ENCODE measurements at regions of chr4 and their contacts with region 1.

Region 1: DNA sequence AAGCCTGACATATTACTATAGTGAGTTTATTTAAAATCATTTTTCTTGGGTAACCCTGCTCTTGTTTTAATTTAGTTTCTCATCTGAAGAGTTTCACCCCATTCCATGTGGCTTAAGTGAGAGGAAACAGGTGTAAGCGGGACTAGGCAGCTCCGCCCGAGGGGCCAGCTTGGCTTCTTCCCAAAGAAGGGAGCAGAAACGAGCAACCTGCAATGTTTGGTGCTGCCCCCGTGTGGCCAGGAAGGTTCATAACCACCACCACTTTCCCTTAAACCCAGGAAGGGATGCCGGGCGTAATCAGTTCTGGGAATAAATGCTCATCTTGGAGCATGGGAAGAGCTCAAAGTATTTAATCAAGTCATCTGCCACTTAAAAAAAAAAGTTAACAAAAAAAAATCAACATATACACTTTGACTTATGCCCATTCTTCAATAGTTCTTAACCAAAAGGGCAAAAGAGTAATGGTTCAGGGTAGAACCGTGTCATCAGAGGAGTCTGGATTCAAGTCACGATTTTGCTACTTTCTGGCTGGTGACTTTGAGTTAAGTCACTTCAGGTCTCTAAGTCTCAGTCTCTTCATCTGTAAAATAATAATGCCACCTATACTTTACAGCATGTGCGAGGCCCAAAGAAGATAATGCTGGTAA is 147.9 kb downstream of the NSUN7 start:
- DNase-seq: peak; percentile 67
- H3K4me3 Mint-ChIP-seq: peak overlapping the region; percentile 11
- H3K27ac Mint-ChIP-seq: no peak overlapping the region
- H3K4me1 Mint-ChIP-seq: peaks cover 9% of the 10 kb centered on the region
- H3K27me3 Mint-ChIP-seq: peaks cover 14% of the 10 kb centered on the region

Region 2: DNA sequence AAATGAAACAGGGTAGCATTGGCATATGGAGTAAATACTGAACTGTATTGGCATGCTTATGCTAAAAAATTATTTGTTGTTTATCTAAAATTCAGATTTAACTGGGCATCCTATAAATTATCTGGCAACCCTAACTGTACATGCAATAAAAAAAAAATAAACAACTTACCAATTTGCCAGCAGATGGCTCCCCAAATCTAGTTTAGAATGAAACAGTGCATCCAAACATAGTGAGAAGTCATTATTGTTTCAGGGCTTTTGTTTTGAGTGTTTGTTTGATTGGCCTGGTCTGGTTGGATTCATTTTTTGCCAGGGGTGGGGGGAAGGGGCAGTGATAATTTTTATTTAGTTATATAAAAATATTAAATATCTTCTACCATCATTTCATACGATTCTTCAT is 160.8 kb before region 1 on chr4:
- CTCF ChIA-PET with region 1: interaction called, 18 read pairs
- DNase-seq: no peak
- H3K4me3 Mint-ChIP-seq: no peak overlapping the region
- H3K27ac Mint-ChIP-seq: no peak overlapping the region
- H3K4me1 Mint-ChIP-seq: peaks cover 16% of the 10 kb centered on the region
- H3K27me3 Mint-ChIP-seq: peaks cover 19% of the 10 kb centered on the region

Region 3: DNA sequence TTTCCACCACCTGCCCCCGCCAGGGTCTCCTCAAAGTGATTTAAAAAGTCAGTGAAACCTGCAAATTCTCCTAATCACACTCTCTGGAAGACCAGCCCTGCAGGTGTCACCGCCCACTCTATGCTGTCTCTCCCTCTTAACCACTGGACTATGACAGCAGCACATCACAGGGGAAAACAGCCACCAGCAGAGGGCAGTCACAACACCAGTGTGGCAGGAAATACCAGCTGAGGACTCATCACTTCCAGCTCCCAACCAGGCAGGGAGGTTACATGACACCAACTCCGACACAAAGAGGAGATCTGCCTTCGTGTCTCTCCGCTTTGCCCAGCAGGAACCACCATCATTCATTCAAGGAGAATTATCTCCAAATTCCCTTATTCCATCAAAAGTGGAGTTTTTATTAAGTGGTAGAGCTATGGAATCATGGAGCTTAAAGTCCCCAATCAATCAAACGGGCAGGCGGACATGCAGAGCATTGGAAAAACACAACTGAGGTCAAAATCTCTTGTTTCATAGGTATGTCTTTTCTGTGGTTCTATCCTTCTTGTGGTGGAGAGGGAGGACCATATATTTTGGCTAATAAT is 56.6 kb before region 1 on chr4:
- CTCF ChIA-PET with region 1: interaction called, 36 read pairs
- DNase-seq: peak; percentile 85
- H3K4me3 Mint-ChIP-seq: no peak overlapping the region
- H3K27ac Mint-ChIP-seq: no peak overlapping the region
- H3K4me1 Mint-ChIP-seq: no peaks in the 10 kb centered on the region
- H3K27me3 Mint-ChIP-seq: peaks cover 11% of the 10 kb centered on the region

Region 4: GRCh38 chr4:40887288-40888131 is 10.2 kb before region 1 on chr4:
- CTCF ChIA-PET with region 1: interaction called, 13 read pairs
- DNase-seq: no peak
- H3K4me3 Mint-ChIP-seq: no peak overlapping the region
- H3K27ac Mint-ChIP-seq: no peak overlapping the region
- H3K4me1 Mint-ChIP-seq: peaks cover 5% of the 10 kb centered on the region
- H3K27me3 Mint-ChIP-seq: peaks cover 21% of the 10 kb centered on the region

Region 5: GRCh38 chr4:40908702-40909362 is 11.2 kb after region 1 on chr4:
- CTCF ChIA-PET with region 1: interaction called, 11 read pairs
- DNase-seq: peak; percentile 77
- H3K4me3 Mint-ChIP-seq: no peak overlapping the region
- H3K27ac Mint-ChIP-seq: no peak overlapping the region
- H3K4me1 Mint-ChIP-seq: peaks cover 12% of the 10 kb centered on the region
- H3K27me3 Mint-ChIP-seq: no peaks in the 10 kb centered on the region

Region 6: DNA sequence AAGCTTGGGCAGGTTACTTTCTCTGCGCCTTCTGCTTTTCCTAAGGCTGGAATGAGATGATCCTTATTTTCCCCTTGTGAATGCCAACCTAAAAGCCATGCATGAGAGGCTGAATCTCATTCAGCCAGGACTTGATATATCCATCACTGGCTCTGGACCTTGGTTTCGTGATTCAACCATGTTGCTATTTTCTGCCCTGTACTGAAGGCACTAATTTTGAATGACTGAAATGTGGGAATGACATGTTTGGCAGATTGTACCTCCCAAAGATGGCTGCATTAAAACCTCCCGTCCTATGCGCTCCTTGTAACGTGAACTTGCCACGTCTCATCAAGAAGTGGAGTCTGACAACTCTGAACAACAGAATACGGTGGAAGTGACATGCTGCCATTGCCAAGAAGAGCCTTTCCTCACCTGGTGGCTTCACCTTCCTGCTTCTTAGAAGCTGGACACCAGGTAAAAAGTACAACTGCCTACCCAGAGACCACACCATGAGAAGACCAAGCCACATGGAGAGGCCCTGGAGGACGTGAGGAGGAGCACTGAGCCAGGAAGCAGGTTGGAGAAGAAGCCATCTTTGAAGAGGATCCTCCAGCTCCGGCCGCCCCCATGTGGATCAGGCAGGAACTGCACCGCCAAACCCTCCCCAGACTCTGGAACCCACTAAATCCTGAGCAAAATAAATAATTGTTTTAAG is 26.6 kb after region 1 on chr4:
- CTCF ChIA-PET with region 1: interaction called, 34 read pairs
- DNase-seq: peak; percentile 79
- H3K4me3 Mint-ChIP-seq: no peak overlapping the region
- H3K27ac Mint-ChIP-seq: peak overlapping the region; percentile 60
- H3K4me1 Mint-ChIP-seq: peaks cover 3% of the 10 kb centered on the region
- H3K27me3 Mint-ChIP-seq: peaks cover 11% of the 10 kb centered on the region

Measured in activated naive CD4-positive, alpha-beta T cell treated with anti-CD3 and anti-CD28 coated beads, Interleukin-2, amount 10 ng/mL, durations not matched to agents 7 days and 5 days (primary cell).